WTC11 (cell line): ENCODE measurements at regions of chr1 and their contacts with region 1.

Region 1: GRCh38 chr1:85259118-85259911 is at the start of gene C1orf52:
- DNase-seq: peak; percentile 99
- ATAC-seq: peak; percentile 96
- H3K4me3 Mint-ChIP-seq: peak within 1 kb of the TSS; percentile 95
- H3K27ac Mint-ChIP-seq: peak within 1 kb of the TSS; percentile 84
- H3K4me1 Mint-ChIP-seq: peaks cover 23% of the 10 kb centered on the region
- H3K27me3 Mint-ChIP-seq: peaks cover 7% of the 10 kb centered on the region
- CTCF ChIP-seq: peak; percentile 99
- total RNA-seq, gene C1orf52: 35.8 to 44.5 TPM (median 40.2 TPM) in 3 replicates

Region 2: GRCh38 chr1:85061711-85062424 is 197.4 kb before region 1 on chr1:
- CTCF ChIA-PET with region 1: interaction called, 14 read pairs
- POLR2A ChIA-PET with region 1: no interaction called
- DNase-seq: peak; percentile 91
- ATAC-seq: peak; percentile 100
- H3K4me3 Mint-ChIP-seq: peak overlapping the region; percentile 90
- H3K27ac Mint-ChIP-seq: peak overlapping the region; percentile 73; the same call in 1 of the 2 replicates
- H3K4me1 Mint-ChIP-seq: peaks cover 25% of the 10 kb centered on the region
- H3K27me3 Mint-ChIP-seq: peaks cover 8% of the 10 kb centered on the region
- CTCF ChIP-seq: no peak

Region 3: GRCh38 chr1:85230305-85230980 is 28.9 kb before region 1 on chr1:
- CTCF ChIA-PET with region 1: interaction called, 10 read pairs
- POLR2A ChIA-PET with region 1: no interaction called
- DNase-seq: peak; percentile 25
- ATAC-seq: peak; percentile 98
- H3K4me3 Mint-ChIP-seq: no peak overlapping the region
- H3K27ac Mint-ChIP-seq: no peak overlapping the region
- H3K4me1 Mint-ChIP-seq: peaks cover 28% of the 10 kb centered on the region
- H3K27me3 Mint-ChIP-seq: no peaks in the 10 kb centered on the region
- CTCF ChIP-seq: no peak

Region 4: DNA sequence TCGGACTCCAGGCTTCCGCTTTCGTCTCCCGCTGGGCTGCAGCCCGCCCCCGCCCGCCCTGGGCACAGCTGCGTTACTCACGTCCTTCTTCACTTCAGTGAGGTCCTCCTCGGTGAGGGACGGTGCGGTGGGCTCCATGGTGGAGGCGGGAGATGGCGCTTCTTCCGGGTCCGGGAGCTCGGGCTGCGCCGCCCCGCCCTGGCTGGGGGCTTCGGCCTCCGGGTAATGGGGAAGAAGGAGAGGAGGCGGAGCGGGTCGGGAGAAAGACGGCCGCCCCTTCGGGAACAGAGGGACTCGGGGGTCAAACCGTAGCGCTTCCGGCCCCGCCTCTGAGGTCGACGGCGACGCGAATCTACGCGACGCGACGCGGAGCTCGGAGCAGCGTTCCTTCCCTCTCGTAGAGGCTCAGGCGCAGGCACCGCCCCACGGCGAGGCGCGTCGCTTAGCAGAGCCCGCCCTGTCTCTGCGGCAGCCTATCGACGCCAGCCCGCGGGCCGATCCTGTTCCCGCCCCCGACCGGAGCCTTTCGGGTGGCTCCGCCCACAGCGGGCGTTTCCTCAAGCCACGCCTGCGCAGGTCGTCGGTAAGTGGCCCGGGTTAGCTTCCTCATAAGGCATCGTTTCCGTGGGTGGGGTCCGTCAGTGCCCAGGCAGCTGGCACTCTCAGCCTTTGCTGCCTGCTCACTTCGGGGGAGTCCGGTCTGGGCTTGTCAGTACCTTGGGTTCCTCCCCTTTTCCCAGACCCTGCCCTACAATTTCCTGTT is 17.1 kb after region 1 on chr1 and contains the start of gene BCL10:
- CTCF ChIA-PET with region 1: interaction called, 83 read pairs
- POLR2A ChIA-PET with region 1: interaction called, 15 read pairs
- DNase-seq: peak; percentile 98
- ATAC-seq: peak; percentile 98
- H3K4me3 Mint-ChIP-seq: peak within 1 kb of the TSS; percentile 82
- H3K27ac Mint-ChIP-seq: peak within 1 kb of the TSS; percentile 96
- H3K4me1 Mint-ChIP-seq: peaks cover 34% of the 10 kb centered on the region
- H3K27me3 Mint-ChIP-seq: no peaks in the 10 kb centered on the region
- CTCF ChIP-seq: no peak
- total RNA-seq, gene BCL10: 21.3 to 24.2 TPM (median 21.4 TPM) in 3 replicates

Region 5: DNA sequence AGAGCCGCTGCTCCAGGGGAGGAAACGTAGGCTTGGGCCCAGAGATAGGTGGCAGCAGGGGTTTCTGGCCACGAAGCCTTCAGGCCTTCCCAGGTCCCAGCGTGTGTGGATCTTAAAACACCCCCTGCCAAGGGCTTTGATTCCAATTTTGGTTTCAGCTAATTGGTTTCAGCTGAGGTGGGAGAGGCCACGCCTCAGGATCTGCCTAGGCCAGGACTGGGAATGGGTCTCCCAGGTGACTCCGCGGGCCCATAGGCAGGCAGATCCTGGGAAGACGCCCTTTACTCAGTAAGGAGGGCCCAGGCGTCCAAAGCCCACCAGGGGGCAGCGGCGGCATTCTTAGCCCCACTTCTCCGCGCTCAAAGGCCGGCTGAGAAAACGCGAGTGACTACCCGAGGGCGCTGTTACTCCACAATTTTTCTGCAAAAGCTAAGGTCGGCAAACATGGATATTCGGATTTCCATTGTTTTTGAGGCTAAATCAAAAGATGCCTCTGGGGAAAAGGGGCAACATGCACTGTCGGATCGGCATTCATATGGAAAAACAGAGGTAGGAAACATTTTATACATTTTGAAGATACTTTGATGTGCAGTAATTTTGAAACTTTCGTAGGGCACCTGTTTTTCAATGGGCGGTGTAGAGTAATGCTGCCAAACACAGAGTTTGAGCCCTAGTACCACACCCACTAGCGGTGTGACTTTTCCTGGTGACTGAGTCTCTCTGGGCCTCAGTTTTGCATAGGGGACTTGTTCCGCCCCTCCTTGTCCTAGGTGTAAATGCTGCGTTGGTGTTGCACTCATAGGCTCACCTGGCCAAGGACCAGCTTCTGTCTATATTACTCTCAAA is 48.9 kb after region 1 on chr1:
- CTCF ChIA-PET with region 1: interaction called, 10 read pairs
- POLR2A ChIA-PET with region 1: no interaction called
- DNase-seq: peak; percentile 95
- ATAC-seq: peak; percentile 99
- H3K4me3 Mint-ChIP-seq: peak overlapping the region; percentile 51
- H3K27ac Mint-ChIP-seq: 0 out of 2 replicates have a peak overlapping the region, but pooled peaks have one; percentile 35
- H3K4me1 Mint-ChIP-seq: peaks cover 20% of the 10 kb centered on the region
- H3K27me3 Mint-ChIP-seq: no peaks in the 10 kb centered on the region
- CTCF ChIP-seq: peak; percentile 80

Region 6: GRCh38 chr1:85330711-85331290 is 71.5 kb after region 1 on chr1:
- CTCF ChIA-PET with region 1: no interaction called
- POLR2A ChIA-PET with region 1: no interaction called
- DNase-seq: no peak
- ATAC-seq: no peak
- H3K4me3 Mint-ChIP-seq: no peak overlapping the region
- H3K27ac Mint-ChIP-seq: no peak overlapping the region; the same call in 1 of the 2 replicates
- H3K4me1 Mint-ChIP-seq: peaks cover 39% of the 10 kb centered on the region
- H3K27me3 Mint-ChIP-seq: no peaks in the 10 kb centered on the region
- CTCF ChIP-seq: no peak

Region 7: GRCh38 chr1:85599076-85599491 is 339.8 kb after region 1 on chr1:
- CTCF ChIA-PET with region 1: no interaction called
- POLR2A ChIA-PET with region 1: no interaction called
- DNase-seq: no peak
- ATAC-seq: no peak
- H3K4me3 Mint-ChIP-seq: no peak overlapping the region
- H3K27ac Mint-ChIP-seq: no peak overlapping the region
- H3K4me1 Mint-ChIP-seq: peaks cover 41% of the 10 kb centered on the region
- H3K27me3 Mint-ChIP-seq: peaks cover 4% of the 10 kb centered on the region; the same call in 1 of the 2 replicates
- CTCF ChIP-seq: no peak